PC-9 (cell line): ENCODE measurements at regions of chr3 and their contacts with region 1.

Region 1: DNA sequence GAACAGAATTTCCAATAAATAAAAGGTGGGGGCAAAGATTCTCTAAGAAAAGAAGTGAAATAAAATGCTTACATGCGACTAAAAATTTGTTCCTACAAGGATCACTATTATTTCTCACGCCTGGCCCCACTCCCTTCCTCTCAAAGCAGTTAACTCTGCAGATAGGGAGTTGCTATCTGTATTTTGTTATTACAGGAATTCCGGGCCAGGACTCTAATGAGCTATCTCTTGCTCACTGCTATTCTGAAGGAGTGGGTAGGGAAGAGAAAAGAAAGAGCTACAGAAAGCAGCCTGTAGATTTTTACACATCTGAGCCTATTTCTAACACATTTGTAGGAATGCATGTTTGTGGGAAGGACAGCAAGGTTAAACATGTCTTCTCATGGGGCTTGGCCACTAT is 140.4 kb downstream of the PCCB start:
- DNase-seq: no peak
- H3K4me3 ChIP-seq: no peak overlapping the region
- H3K27ac ChIP-seq: no peak overlapping the region
- H3K4me1 ChIP-seq: no peaks in the 10 kb centered on the region
- H3K27me3 ChIP-seq: no peaks in the 10 kb centered on the region
- CTCF ChIP-seq: no peak

Region 2: GRCh38 chr3:136068708-136069107 is 321.9 kb before region 1 on chr3:
- CTCF ChIA-PET with region 1: no interaction called
- POLR2A ChIA-PET with region 1: no interaction called
- intact Hi-C with region 1: no loop called
- DNase-seq: no peak
- H3K4me3 ChIP-seq: no peak overlapping the region
- H3K27ac ChIP-seq: no peak overlapping the region
- H3K4me1 ChIP-seq: no peaks in the 10 kb centered on the region
- H3K27me3 ChIP-seq: no peaks in the 10 kb centered on the region
- CTCF ChIP-seq: no peak

Region 3: GRCh38 chr3:136305878-136306277 is 84.7 kb before region 1 on chr3:
- CTCF ChIA-PET with region 1: interaction called, 8 read pairs
- POLR2A ChIA-PET with region 1: no interaction called
- intact Hi-C with region 1: loop called (anchors 5 kb)
- DNase-seq: peak; percentile 7 to 36
- H3K4me3 ChIP-seq: no peak overlapping the region
- H3K27ac ChIP-seq: no peak overlapping the region
- H3K4me1 ChIP-seq: no peaks in the 10 kb centered on the region
- H3K27me3 ChIP-seq: no peaks in the 10 kb centered on the region
- CTCF ChIP-seq: peak; percentile 75

Region 4: DNA sequence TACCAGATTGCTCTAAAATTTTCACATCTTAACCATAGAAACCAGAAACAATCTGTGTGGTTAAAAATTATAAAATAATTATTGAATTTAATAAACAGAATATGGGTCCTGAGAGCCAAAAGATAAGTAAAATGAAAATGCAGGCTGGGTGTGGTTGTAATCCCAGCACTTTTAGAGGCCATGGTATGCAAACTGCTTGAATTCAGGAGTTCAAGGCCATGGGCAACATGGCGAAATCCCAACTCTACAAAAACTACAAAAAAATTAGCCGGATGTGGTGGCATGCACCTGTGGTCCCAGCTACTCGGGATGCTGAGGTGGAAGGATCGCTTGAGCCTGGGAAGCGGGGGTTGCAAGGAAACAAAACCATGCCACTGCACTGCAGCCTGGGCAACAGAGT is 125.5 kb after region 1 on chr3:
- CTCF ChIA-PET with region 1: interaction called, 17 read pairs
- POLR2A ChIA-PET with region 1: no interaction called
- intact Hi-C with region 1: no loop called
- DNase-seq: no peak
- H3K4me3 ChIP-seq: no peak overlapping the region
- H3K27ac ChIP-seq: no peak overlapping the region
- H3K4me1 ChIP-seq: no peaks in the 10 kb centered on the region
- H3K27me3 ChIP-seq: no peaks in the 10 kb centered on the region
- CTCF ChIP-seq: no peak